Common myeloid progenitor, CD34-positive (primary cell): ENCODE measurements at regions of chrX and their contacts with region 1.

Region 1: GRCh38 chrX:51641421-51642021 is 22.8 kb upstream of the CENPVL3 start:
- DNase-seq: peak; percentile 50 to 77 (median 75)
- H3K4me3 ChIP-seq: no peak overlapping the region
- H3K27ac ChIP-seq: no peak overlapping the region
- H3K4me1 ChIP-seq: no peaks in the 10 kb centered on the region
- H3K27me3 ChIP-seq: peaks cover 0 to 34% (median 4%) of the 10 kb centered on the region in 5 experiments

Region 2: DNA sequence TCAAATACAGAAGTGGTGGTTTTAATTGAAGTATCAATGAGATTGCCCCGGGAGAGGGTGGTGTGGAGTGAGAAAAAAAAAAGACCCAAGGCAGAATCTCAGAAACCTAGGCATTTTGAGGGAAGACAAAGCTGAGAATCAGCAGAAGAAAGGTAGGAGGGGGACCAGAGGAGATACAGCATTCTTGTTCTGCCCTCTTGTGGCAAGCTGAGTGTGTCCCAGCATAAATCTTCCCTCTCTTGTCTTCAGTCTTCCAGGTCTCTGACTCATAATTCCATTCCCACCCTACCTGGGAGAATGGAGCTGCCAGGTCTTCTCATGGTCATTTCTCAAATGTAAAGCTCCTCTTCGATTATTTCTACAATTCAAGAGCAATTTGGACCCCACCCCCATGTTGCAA is 219.2 kb after region 1 on chrX:
- CTCF ChIA-PET with region 1: interaction called, 17 read pairs
- POLR2A ChIA-PET with region 1: no interaction called
- DNase-seq: peak; percentile 31 to 51 (median 45)
- H3K4me3 ChIP-seq: no peak overlapping the region
- H3K27ac ChIP-seq: no peak overlapping the region
- H3K4me1 ChIP-seq: no peaks in the 10 kb centered on the region
- H3K27me3 ChIP-seq: no peaks in the 10 kb centered on the region

Region 3: GRCh38 chrX:52217494-52218160 is 576.1 kb after region 1 on chrX:
- CTCF ChIA-PET with region 1: interaction called, 11 read pairs
- POLR2A ChIA-PET with region 1: no interaction called
- DNase-seq: peak in 2 of 3 donors; percentile 26 to 30
- H3K4me3 ChIP-seq: no peak overlapping the region
- H3K27ac ChIP-seq: no peak overlapping the region
- H3K4me1 ChIP-seq: no peaks in the 10 kb centered on the region
- H3K27me3 ChIP-seq: peaks cover 0 to 5% (median 0%) of the 10 kb centered on the region in 5 experiments